Gastrocnemius medialis (tissue), 4 donors: ENCODE measurements at regions of chr12 and their contacts with region 1.

Region 1: GRCh38 chr12:57693659-57694458 is at the start of gene OS9:
- DNase-seq: peak; percentile 99
- ATAC-seq: peak; percentile 98 to 99
- H3K4me3 ChIP-seq: peak within 1 kb of the TSS; percentile 68 to 97 (median 79)
- H3K27ac ChIP-seq: peak within 1 kb of the TSS; percentile 77 to 90 (median 86)
- H3K4me1 ChIP-seq: peaks cover 7% of the 10 kb centered on the region in 2 donors
- H3K27me3 ChIP-seq: peaks cover 0 to under 1% (median 0%) of the 10 kb centered on the region in 3 donors
- CTCF ChIP-seq: peak; percentile 75 to 84 (median 78)
- POLR2A ChIP-seq: peak; percentile 71 to 73
- total RNA-seq, gene OS9: 77.0 to 152 (median 106) TPM

Region 2: DNA sequence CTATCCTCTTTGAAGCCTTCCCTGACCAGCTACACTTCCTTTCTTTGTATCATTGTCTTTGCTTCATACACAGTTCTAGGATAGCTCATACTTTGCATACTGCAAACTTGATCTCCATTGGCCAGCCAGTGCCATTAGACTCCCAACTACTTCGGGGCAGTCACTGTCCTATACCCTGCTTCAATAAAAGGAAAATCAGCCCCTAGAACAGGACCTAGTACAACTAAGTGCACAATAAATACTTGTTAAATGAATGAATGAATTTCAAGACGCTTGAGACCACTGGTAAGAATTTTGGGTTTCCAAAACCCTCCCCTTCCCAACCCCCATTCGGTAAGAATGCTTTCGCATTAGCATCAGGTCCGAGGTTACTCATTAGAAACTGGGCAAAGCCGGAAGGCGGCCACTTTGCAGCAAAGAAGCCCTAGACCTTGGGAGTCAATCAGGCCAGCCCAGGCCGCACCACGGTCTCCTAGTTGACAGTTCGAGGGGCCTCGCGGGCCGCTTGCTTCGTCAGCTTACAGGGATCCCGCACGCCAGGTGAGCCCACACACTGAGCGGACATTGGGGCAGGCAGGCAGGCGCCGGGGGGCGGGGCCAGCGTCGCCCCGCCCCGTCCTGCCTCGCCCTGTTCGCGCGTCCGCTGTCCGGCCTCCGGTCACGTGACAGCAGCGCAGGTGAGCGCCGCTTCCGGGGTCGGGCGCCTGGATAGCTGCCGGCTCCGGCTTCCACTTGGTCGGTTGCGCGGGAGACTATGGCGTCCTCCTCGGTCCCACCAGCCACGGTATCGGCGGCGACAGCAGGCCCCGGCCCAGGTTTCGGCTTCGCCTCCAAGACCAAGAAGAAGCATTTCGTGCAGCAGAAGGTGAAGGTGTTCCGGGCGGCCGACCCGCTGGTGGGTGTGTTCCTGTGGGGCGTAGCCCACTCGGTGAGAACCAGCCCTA is 103.1 kb before region 1 on chr12 and contains the start of gene PIP4K2C:
- in situ Hi-C with region 1: no loop called
- intact Hi-C with region 1: loop called (anchors 2 kb)
- DNase-seq: peak; percentile 66 to 74
- ATAC-seq: peak; percentile 92 to 95
- H3K4me3 ChIP-seq: peak within 1 kb of the TSS; percentile 79 to 94 (median 86)
- H3K27ac ChIP-seq: peak within 1 kb of the TSS; percentile 66 to 79 (median 76)
- H3K4me1 ChIP-seq: peaks cover 8 to 13% of the 10 kb centered on the region in 2 donors
- H3K27me3 ChIP-seq: no peaks in the 10 kb centered on the region
- CTCF ChIP-seq: no peak
- POLR2A ChIP-seq: peak in 1 of 2 donors; percentile 37
- total RNA-seq, gene PIP4K2C: 11.2 to 22.0 (median 14.6) TPM

Region 3: DNA sequence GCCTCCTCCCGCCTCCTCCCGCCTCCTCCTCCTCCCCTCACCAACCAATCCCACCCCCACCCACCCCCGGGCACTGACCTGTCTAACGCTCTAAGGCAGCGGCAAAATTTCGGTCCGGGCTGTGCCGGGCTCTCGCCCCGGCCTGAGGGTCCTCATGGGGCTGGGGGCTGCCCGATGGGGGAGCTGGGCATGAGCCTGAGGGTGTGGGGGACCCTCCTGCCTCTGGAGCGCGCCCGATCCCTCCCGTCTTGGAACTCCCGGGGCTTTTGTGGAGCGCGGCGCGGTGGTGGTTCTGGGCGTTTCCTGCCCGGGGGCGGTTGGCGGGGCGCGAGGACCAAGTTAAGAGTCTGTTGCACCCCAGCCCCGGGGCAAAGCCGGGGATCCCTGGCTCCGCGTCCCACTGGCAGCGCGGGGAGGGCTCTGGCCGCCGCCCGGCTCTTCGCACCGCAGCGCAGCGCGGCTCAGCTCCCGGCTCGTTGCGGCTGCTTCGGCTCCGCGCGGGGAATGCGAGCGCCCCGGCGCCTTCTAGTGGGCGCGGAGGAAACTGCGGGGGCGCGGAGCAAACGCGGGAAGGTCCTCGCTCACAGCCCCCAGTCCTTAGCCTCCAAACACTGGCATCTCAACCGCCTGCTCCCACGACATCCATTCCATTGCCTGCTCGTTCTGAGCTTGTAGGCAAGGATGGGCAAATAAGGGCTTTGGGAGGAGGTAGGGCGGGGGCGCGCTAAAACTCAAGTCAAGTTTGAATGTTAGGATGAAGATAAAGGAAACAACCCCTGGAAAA is 61.0 kb before region 1 on chr12 and contains the start of gene B4GALNT1:
- in situ Hi-C with region 1: no loop called
- intact Hi-C with region 1: loop called (anchors 2 kb)
- DNase-seq: no peak
- ATAC-seq: peak; percentile 87 to 88
- H3K4me3 ChIP-seq: peak within 1 kb of the TSS; percentile 70 to 82 (median 78)
- H3K27ac ChIP-seq: peak within 1 kb of the TSS; percentile 19 to 69 (median 64)
- H3K4me1 ChIP-seq: peaks cover 0 to 11% of the 10 kb centered on the region in 2 donors
- H3K27me3 ChIP-seq: peaks cover 0 to 3% (median 0%) of the 10 kb centered on the region in 3 donors
- CTCF ChIP-seq: peak; percentile 72 to 89 (median 88)
- POLR2A ChIP-seq: peak in 1 of 2 donors; percentile 37
- total RNA-seq, gene B4GALNT1: 13.2 to 25.5 (median 16.6) TPM

Region 4: DNA sequence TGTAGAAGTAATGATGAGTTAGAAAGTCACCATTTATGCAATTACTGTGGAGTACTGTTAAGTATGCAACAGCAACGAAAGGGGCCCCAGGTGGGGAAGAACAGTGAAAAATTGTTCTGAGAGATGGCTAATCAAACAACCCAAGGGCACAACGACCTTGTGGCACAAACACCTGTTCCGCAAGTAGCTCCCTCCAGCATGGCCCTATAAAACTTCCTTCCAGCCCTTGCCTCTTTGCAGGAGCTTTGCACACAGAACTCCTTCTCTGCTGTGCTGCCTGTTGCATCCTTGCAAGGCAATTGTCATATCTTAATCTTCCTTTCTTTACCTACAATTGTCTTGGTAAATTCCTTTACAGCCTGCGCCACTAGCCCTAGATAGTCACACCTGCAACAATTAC is 224.3 kb after region 1 on chr12:
- in situ Hi-C with region 1: no loop called
- intact Hi-C with region 1: no loop called
- DNase-seq: no peak
- ATAC-seq: no peak
- H3K4me3 ChIP-seq: no peak overlapping the region
- H3K27ac ChIP-seq: no peak overlapping the region
- H3K4me1 ChIP-seq: no peaks in the 10 kb centered on the region
- H3K27me3 ChIP-seq: peaks cover 0 to 2% (median 0%) of the 10 kb centered on the region in 3 donors
- CTCF ChIP-seq: no peak
- POLR2A ChIP-seq: no peak